ENCODE measurements at regions of chr10 and their contacts with region 1.

Region 1: DNA sequence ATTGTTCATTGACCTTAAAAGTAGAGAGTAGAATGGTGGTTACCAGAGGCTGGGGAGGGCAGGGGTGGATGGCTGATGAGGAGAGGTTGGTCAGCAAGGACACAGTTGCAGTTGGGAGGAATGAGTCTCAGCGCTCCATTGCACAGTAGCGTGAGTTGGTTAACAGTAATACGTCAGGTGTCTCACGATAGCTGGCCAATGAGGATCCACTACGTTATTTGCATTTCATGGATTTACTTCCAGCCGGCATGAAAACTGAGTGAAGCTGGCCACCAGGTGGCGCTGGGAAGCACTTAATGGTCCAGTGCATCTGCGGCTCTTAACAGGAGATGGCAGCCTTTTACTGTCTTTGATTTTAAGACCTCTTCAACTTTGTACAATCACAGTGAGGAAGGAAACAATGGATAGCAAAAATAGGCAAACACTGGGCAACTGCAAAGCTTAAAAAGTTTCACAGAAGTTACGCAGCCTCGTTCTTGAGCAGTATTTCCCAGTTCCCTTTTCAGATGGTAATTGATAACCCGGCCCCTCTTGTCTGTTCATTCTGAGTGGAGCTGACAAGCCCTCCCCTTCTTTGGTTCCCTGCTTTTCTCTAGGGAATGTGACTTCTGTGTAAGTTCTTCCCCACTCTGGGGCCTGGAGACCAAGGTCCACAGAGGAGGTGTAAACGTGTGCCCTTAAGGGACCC is 23.7 kb downstream of the AKR1E2 start:
- DNase-seq: peak; percentile 75 to 93 (median 82)
- ATAC-seq: peak; percentile 95
- H3K4me3 ChIP-seq: no peak overlapping the region
- H3K4me3 Mint-ChIP-seq: no peak overlapping the region
- H3K27ac ChIP-seq: no peak overlapping the region
- H3K27ac Mint-ChIP-seq: peak overlapping the region; percentile 45
- H3K4me1 ChIP-seq: peaks cover 9% of the 10 kb centered on the region
- H3K4me1 Mint-ChIP-seq: peaks cover 8% of the 10 kb centered on the region
- H3K27me3 ChIP-seq: no peaks in the 10 kb centered on the region
- H3K27me3 Mint-ChIP-seq: no peaks in the 10 kb centered on the region
- CTCF ChIP-seq: peak; percentile 97

Region 2: DNA sequence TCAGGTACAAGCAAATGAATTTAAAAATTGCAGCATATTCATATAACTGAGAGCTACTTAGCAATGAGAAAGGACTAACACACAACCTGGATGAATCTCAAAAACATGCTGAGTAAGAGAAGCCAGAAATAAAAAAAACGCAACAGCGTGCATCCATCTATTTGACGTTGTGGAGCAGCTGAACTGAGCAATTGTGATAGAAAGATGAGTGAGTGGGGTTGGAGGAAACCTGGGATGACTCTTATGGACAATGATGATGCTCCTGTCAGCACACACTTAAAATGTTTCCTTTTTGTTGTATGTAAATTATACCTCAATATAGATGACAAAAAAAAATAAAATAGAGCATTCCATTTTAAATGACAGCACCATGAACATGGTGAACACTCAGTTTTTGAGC is 59.7 kb before region 1 on chr10:
- CTCF ChIA-PET with region 1: no interaction called
- POLR2A ChIA-PET with region 1: no interaction called
- intact Hi-C with region 1: no loop called
- DNase-seq: no peak
- ATAC-seq: no peak
- H3K4me3 ChIP-seq: no peak overlapping the region
- H3K4me3 Mint-ChIP-seq: no peak overlapping the region
- H3K27ac ChIP-seq: no peak overlapping the region
- H3K27ac Mint-ChIP-seq: no peak overlapping the region
- H3K4me1 ChIP-seq: no peaks in the 10 kb centered on the region
- H3K4me1 Mint-ChIP-seq: no peaks in the 10 kb centered on the region
- H3K27me3 ChIP-seq: peaks cover 5 to 7% of the 10 kb centered on the region in 2 experiments
- H3K27me3 Mint-ChIP-seq: peaks cover 16% of the 10 kb centered on the region
- CTCF ChIP-seq: no peak

Region 3: DNA sequence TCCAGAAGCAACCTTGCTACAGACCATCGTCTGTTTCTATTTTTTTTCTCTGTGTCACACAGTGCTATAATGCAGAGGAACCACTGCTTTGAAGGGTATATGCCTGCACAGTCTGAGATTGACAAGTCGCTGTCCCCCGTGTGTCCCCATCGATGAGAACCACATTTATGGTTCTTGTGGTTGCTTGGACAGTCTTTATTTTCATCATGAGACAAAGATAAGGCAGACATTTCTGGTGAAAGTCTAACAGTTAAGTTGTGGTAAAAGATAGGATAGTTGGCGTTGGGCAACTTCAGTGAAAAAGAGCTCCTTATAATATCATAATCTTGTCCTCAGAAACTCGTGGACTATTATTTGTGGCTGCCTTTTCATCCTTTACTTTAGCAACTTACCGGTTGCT is 30.0 kb before region 1 on chr10:
- CTCF ChIA-PET with region 1: interaction called, 9 read pairs
- POLR2A ChIA-PET with region 1: no interaction called
- intact Hi-C with region 1: loop called in 1 of 2 experiments (anchors 2 kb)
- DNase-seq: no peak
- ATAC-seq: no peak
- H3K4me3 ChIP-seq: no peak overlapping the region
- H3K4me3 Mint-ChIP-seq: no peak overlapping the region
- H3K27ac ChIP-seq: no peak overlapping the region
- H3K27ac Mint-ChIP-seq: no peak overlapping the region
- H3K4me1 ChIP-seq: peaks cover 3% of the 10 kb centered on the region
- H3K4me1 Mint-ChIP-seq: no peaks in the 10 kb centered on the region
- H3K27me3 ChIP-seq: peaks cover 0 to 4% of the 10 kb centered on the region in 2 experiments
- H3K27me3 Mint-ChIP-seq: peaks cover 23% of the 10 kb centered on the region
- CTCF ChIP-seq: no peak

Region 4: GRCh38 chr10:5283305-5284158 is 433.8 kb after region 1 on chr10:
- CTCF ChIA-PET with region 1: interaction called, 18 read pairs
- POLR2A ChIA-PET with region 1: no interaction called
- intact Hi-C with region 1: loop called (anchors 1 kb)
- DNase-seq: peak in 12 of 14 experiments; percentile 11 to 82 (median 62)
- ATAC-seq: peak; percentile 80
- H3K4me3 ChIP-seq: no peak overlapping the region
- H3K4me3 Mint-ChIP-seq: no peak overlapping the region
- H3K27ac ChIP-seq: no peak overlapping the region
- H3K27ac Mint-ChIP-seq: no peak overlapping the region
- H3K4me1 ChIP-seq: peaks cover 26% of the 10 kb centered on the region
- H3K4me1 Mint-ChIP-seq: peaks cover 18% of the 10 kb centered on the region
- H3K27me3 ChIP-seq: no peaks in the 10 kb centered on the region
- H3K27me3 Mint-ChIP-seq: peaks cover 5% of the 10 kb centered on the region
- CTCF ChIP-seq: peak; percentile 72

Region 5: GRCh38 chr10:5385224-5385623 is 535.5 kb after region 1 on chr10:
- CTCF ChIA-PET with region 1: interaction called, 10 read pairs
- POLR2A ChIA-PET with region 1: no interaction called
- intact Hi-C with region 1: loop called (anchors 1 kb)
- DNase-seq: no peak
- ATAC-seq: no peak
- H3K4me3 ChIP-seq: no peak overlapping the region
- H3K4me3 Mint-ChIP-seq: no peak overlapping the region
- H3K27ac ChIP-seq: no peak overlapping the region
- H3K27ac Mint-ChIP-seq: no peak overlapping the region
- H3K4me1 ChIP-seq: peaks cover 4% of the 10 kb centered on the region
- H3K4me1 Mint-ChIP-seq: no peaks in the 10 kb centered on the region
- H3K27me3 ChIP-seq: no peaks in the 10 kb centered on the region
- H3K27me3 Mint-ChIP-seq: peaks cover 9% of the 10 kb centered on the region
- CTCF ChIP-seq: no peak

Region 6: DNA sequence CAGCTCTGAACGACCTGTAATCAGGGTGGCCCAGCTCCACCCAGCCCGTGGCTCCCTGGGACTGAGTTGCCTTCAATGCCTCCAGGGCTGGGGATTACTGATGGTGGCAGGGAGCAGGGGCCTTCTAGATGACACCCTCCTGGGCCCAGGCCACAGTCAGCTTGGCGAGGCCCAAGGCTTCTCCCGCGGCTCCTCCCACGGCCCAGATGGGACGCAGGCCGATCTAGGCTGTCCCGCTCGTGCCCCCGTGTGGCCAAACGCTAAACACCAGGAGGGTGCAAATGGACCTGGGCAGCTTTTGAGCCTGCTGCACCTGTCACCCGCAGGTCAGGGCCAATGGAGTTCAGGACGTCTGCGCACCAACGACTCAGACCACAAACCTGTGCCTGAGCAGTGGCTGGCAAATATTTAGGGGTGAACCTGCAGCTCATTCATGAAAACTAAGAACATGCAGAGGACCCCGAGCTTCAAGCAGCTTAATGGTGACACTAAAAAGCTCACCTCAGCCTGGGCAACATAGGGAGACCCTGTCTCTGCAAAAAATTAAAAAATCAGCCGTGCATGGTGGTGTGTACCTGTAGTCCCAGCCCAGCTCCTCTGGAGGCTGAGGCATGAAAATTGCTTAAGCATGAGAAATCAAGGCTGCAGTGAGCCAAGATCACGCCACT is 773.5 kb after region 1 on chr10:
- CTCF ChIA-PET with region 1: interaction called, 26 read pairs
- POLR2A ChIA-PET with region 1: no interaction called
- intact Hi-C with region 1: loop called (anchors 1 to 2 kb)
- DNase-seq: peak; percentile 66 to 89 (median 78)
- ATAC-seq: peak; percentile 100
- H3K4me3 ChIP-seq: no peak overlapping the region
- H3K4me3 Mint-ChIP-seq: no peak overlapping the region
- H3K27ac ChIP-seq: no peak overlapping the region
- H3K27ac Mint-ChIP-seq: no peak overlapping the region
- H3K4me1 ChIP-seq: peaks cover 6% of the 10 kb centered on the region
- H3K4me1 Mint-ChIP-seq: no peaks in the 10 kb centered on the region
- H3K27me3 ChIP-seq: no peaks in the 10 kb centered on the region
- H3K27me3 Mint-ChIP-seq: no peaks in the 10 kb centered on the region
- CTCF ChIP-seq: peak; percentile 89

Region 7: DNA sequence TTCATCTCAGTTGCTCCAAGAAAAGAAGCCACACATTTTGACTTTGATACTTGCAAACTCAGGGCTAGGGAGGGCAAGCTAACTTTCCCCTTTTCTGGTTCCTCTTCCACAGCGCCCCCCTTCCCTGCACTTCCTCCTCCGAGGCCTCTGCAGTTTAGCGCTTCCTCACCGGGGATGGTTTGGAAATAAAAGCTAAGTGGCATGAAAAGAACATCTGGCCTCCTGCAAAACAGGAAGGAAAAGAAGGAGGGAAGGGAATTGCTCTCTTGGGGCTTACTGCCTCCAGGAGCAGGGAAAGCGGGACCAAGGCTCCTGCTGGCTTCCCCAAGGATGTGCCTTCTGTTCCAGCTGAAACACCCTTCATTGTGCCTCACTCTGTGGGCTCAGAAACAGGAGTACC is 1688.1 kb after region 1 on chr10:
- CTCF ChIA-PET with region 1: no interaction called
- POLR2A ChIA-PET with region 1: no interaction called
- intact Hi-C with region 1: loop called in 1 of 2 experiments (anchors 5 kb)
- DNase-seq: peak in 1 of 14 experiments; percentile 23
- ATAC-seq: no peak
- H3K4me3 ChIP-seq: no peak overlapping the region
- H3K4me3 Mint-ChIP-seq: no peak overlapping the region
- H3K27ac ChIP-seq: no peak overlapping the region
- H3K27ac Mint-ChIP-seq: peak overlapping the region; percentile 72
- H3K4me1 ChIP-seq: peaks cover 63% of the 10 kb centered on the region
- H3K4me1 Mint-ChIP-seq: peaks cover 83% of the 10 kb centered on the region
- H3K27me3 ChIP-seq: no peaks in the 10 kb centered on the region
- H3K27me3 Mint-ChIP-seq: no peaks in the 10 kb centered on the region
- CTCF ChIP-seq: no peak

Measured in CD4-positive, alpha-beta T cell (primary cell).